ENCODE measurements at regions of chr6 and their contacts with region 1.

Region 1: GRCh38 chr6:170295510-170296422 is 4.9 kb upstream of the DLL1 start:
- DNase-seq: peak in 4 of 10 donors; percentile 65 to 91 (median 75)

Region 2: GRCh38 chr6:169789982-169790927 is 505.5 kb before region 1 on chr6:
- intact Hi-C with region 1: loop called (anchors 10 kb)
- DNase-seq: peak; percentile 68 to 97 (median 82)

Region 3: DNA sequence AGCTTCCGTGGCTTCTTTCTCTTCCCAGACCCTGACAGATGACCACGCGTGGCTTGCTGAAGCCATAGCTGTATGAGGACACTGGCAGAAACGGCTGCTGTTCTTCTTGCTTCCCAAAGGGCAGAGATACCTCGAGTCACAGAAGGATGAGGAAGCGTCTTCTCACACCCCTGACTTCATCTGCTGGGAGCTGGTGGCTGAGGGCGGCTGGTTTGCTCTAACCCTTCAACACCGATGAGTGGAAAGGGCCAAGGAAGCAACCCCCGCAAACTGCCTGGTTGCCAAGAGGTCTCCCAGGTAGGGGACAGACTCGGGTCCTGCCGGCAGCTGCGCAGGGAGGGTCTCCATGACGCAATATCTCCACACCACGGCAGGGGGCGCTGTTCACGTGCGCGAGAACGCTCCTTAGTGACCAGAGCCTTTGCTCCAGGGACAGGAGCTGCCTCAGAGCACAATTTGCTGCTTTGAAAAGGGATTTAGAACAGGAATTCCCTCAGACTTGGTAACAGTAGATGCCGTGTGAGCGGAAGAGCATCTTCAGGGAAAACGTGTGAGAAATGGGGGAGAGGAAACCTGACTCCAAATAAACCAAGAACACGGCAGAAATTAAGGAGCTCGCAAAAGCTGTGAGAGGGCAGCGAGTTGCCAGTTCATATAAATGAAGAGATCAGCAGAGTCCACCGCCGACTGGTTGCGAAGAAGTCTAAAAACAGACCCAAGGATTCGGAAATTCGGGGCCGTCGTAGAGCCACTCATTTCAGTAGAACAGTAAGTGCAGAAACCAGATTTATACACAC is 464.1 kb before region 1 on chr6:
- intact Hi-C with region 1: loop called (anchors 2 kb)
- DNase-seq: peak; percentile 67 to 97 (median 87)

Region 4: GRCh38 chr6:169959136-169960002 is 336.4 kb before region 1 on chr6:
- intact Hi-C with region 1: loop called (anchors 5 kb)
- DNase-seq: peak in 4 of 10 donors; percentile 7 to 83 (median 64)

Region 5: GRCh38 chr6:170110201-170111140 is 185.3 kb before region 1 on chr6:
- intact Hi-C with region 1: no loop called
- DNase-seq: peak in 5 of 10 donors; percentile 11 to 80 (median 47)

Region 6: GRCh38 chr6:170178561-170179477 is 116.9 kb before region 1 on chr6:
- intact Hi-C with region 1: loop called (anchors 5 kb)
- DNase-seq: peak in 2 of 10 donors; percentile 77 to 81

Region 7: GRCh38 chr6:170584181-170584953 is 288.6 kb after region 1 on chr6 and contains the start of gene PDCD2:
- intact Hi-C with region 1: no loop called
- DNase-seq: peak; percentile 89 to 99 (median 93)

Measured in posterior cingulate gyrus (tissue), 11 donors.